ENCODE measurements at regions of chr1 and their contacts with region 1.

Region 1: GRCh38 chr1:15603050-15603965 is 13.9 kb upstream of the DDI2 start:
- DNase-seq: peak; percentile 87
- ATAC-seq: peak; percentile 94
- H3K4me3 Mint-ChIP-seq: peak overlapping the region; percentile 85
- H3K27ac Mint-ChIP-seq: peak overlapping the region; percentile 81
- H3K4me1 Mint-ChIP-seq: peaks cover 14% of the 10 kb centered on the region
- H3K27me3 Mint-ChIP-seq: no peaks in the 10 kb centered on the region
- CTCF ChIP-seq: no peak

Region 2: GRCh38 chr1:15584489-15585363 is 18.6 kb before region 1 on chr1 and contains the start of gene AGMAT:
- CTCF ChIA-PET with region 1: no interaction called
- POLR2A ChIA-PET with region 1: interaction called, 10 read pairs
- intact Hi-C with region 1: loop called (anchors 1 kb)
- DNase-seq: peak; percentile 64
- ATAC-seq: peak; percentile 87
- H3K4me3 Mint-ChIP-seq: peak within 1 kb of the TSS; percentile 82
- H3K27ac Mint-ChIP-seq: peak within 1 kb of the TSS; percentile 81
- H3K4me1 Mint-ChIP-seq: peaks cover 19% of the 10 kb centered on the region
- H3K27me3 Mint-ChIP-seq: no peaks in the 10 kb centered on the region
- CTCF ChIP-seq: no peak
- total RNA-seq, gene AGMAT: 8.1 TPM in 2 replicates

Region 3: GRCh38 chr1:15684468-15685291 is 81.4 kb after region 1 on chr1:
- CTCF ChIA-PET with region 1: no interaction called
- POLR2A ChIA-PET with region 1: interaction called, 7 read pairs
- intact Hi-C with region 1: loop called (anchors 1 kb)
- DNase-seq: peak; percentile 46
- ATAC-seq: peak; percentile 6
- H3K4me3 Mint-ChIP-seq: peak overlapping the region; percentile 88
- H3K27ac Mint-ChIP-seq: peak overlapping the region; percentile 81
- H3K4me1 Mint-ChIP-seq: peaks cover 70% of the 10 kb centered on the region
- H3K27me3 Mint-ChIP-seq: no peaks in the 10 kb centered on the region
- CTCF ChIP-seq: no peak